ENCODE measurements at regions of chr14 and their contacts with region 1.

Region 1: GRCh38 chr14:104078031-104078455 is 7.5 kb upstream of the ASPG start:
- DNase-seq: peak; percentile 88
- ATAC-seq: peak; percentile 89 to 91

Region 2: GRCh38 chr14:103943673-103944072 is 134.4 kb before region 1 on chr14:
- intact Hi-C with region 1: no loop called
- DNase-seq: no peak
- ATAC-seq: no peak

Region 3: GRCh38 chr14:104130974-104131651 is 53.1 kb after region 1 on chr14:
- intact Hi-C with region 1: loop called (anchors 1 to 5 kb)
- DNase-seq: peak; percentile 66
- ATAC-seq: peak; percentile 70 to 83

Region 4: GRCh38 chr14:104580961-104581360 is 502.9 kb after region 1 on chr14:
- intact Hi-C with region 1: no loop called
- DNase-seq: peak; percentile 76
- ATAC-seq: peak; percentile 15 to 38

Measured in left cardiac atrium (tissue), 4 donors.